ENCODE measurements at regions of chr3 and their contacts with region 1.

Region 1: DNA sequence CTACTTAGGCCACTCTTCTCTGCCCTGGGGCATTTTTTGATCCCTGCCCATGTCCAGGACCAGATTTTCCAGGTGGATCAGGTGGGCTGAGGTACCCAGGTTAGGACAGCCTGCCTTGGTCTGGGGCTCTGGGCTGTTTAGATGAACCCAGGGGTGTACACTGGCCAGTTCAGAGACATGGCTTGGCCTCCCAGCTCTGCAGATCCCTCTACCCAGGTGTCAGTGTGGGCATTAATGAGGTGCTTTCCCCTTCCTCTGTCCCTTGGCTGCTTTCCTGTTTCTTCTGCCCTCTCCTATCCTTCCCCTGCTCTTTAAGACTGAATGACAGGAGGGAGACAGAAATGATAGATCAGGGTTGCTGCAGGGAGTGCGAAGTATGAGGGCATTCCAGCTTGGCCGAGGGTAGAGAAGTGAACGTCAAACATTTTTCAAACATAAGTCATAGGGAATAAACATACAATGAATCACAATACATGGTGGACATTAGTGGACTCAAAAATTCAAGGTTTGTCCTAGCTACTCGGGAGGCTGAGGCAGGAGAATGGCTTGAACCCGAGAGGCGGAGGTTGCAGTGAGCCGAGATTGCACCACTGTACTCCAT is 30.5 kb downstream of the RTP1 start:
- DNase-seq: no peak
- H3K4me3 ChIP-seq: no peak overlapping the region
- H3K27ac ChIP-seq: no peak overlapping the region
- H3K4me1 ChIP-seq: no peaks in the 10 kb centered on the region
- H3K27me3 ChIP-seq: no peaks in the 10 kb centered on the region
- CTCF ChIP-seq: no peak
- EP300 ChIP-seq: no peak
- POLR2A ChIP-seq: no peak

Region 2: GRCh38 chr3:187291001-187291511 is 63.3 kb after region 1 on chr3:
- in situ Hi-C with region 1: no loop called
- intact Hi-C with region 1: loop called (anchors 10 kb)
- DNase-seq: no peak
- H3K4me3 ChIP-seq: peak overlapping the region; percentile 3 to 38 (median 16)
- H3K27ac ChIP-seq: peak overlapping the region; percentile 41 to 85 (median 66)
- H3K4me1 ChIP-seq: peaks cover 0 to 10% (median 6%) of the 10 kb centered on the region in 4 donors
- H3K27me3 ChIP-seq: no peaks in the 10 kb centered on the region
- CTCF ChIP-seq: no peak
- EP300 ChIP-seq: no peak
- POLR2A ChIP-seq: no peak

Region 3: DNA sequence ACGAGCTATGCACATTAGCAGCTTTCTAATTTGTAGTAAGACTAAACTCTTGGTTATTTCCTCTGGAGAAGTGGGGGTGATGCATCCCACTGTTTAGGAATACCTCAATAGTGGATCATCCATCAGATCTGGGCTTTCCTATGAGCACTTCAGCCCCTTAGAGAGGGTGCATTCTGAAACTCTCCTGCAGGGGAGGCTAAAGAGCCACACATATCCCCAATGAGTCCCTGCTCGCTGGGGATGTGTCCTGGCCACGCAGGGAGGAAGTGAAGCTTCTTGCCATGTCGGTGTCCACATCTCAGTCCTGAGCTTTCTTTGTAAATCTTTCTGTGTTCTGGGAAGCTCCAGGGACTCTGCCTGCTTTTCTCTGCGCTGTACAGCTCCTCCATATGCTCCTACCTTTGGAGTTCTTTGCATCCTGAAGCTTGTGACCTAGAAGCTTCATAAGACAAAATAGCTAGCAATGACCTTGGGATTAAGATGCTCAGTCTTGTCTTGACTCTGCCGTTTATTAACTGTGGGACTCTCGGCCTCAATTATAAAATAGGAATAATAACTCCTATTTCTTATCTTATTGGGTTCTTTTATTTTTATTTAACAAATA is 92.0 kb after region 1 on chr3:
- in situ Hi-C with region 1: loop called in 1 of 4 experiments (anchors 10 kb)
- intact Hi-C with region 1: no loop called
- DNase-seq: peak; percentile 76
- H3K4me3 ChIP-seq: no peak overlapping the region
- H3K27ac ChIP-seq: no peak overlapping the region
- H3K4me1 ChIP-seq: peaks cover 0 to 13% (median 9%) of the 10 kb centered on the region in 4 donors
- H3K27me3 ChIP-seq: peaks cover 11% of the 10 kb centered on the region
- CTCF ChIP-seq: peak; percentile 80 to 94 (median 90)
- EP300 ChIP-seq: no peak
- POLR2A ChIP-seq: no peak

Region 4: GRCh38 chr3:187369089-187369447 is 141.3 kb after region 1 on chr3:
- in situ Hi-C with region 1: no loop called
- intact Hi-C with region 1: no loop called
- DNase-seq: no peak
- H3K4me3 ChIP-seq: peak overlapping the region in 3 of 4 donors; percentile 40 to 71 (median 47)
- H3K27ac ChIP-seq: peak overlapping the region; percentile 85 to 94 (median 86)
- H3K4me1 ChIP-seq: peaks cover 9 to 24% (median 15%) of the 10 kb centered on the region in 4 donors
- H3K27me3 ChIP-seq: no peaks in the 10 kb centered on the region
- CTCF ChIP-seq: no peak
- EP300 ChIP-seq: no peak
- POLR2A ChIP-seq: no peak

Region 5: DNA sequence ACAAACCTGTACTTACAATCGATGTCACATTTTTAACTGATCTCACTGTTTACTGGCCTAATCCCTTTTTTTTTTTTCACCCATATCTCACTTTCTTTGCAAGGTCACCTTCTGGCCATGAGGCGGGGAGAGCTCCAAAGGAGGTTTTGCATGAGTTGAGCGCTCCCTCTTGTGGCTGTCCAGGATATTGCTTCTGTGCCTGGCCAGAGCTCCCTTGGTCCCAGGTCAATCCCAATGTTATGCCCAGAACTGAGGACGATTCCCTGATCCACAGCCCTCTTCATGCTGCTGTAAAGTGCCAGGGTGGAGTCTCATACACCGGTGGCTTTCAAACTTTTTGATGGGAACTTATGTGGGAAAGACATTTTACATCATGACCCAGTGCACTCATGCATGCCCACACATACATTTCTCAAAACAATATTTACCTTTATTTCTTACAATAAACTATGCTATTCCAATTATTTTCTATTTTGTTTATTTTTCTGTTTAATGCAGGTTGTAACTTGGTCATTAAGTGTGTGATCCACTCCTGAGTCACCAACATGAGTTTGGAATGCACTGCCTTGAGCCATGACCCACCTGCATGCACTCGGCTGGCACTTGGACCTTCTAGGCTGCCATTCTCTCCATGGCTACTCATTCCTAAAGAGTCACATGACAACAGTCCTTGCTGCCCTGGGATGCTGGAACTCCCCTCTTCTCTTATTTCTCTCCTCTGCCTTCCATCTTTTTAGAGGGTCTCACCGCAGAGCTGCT is 452.1 kb after region 1 on chr3:
- in situ Hi-C with region 1: loop called in 3 of 4 experiments (anchors 10 kb)
- intact Hi-C with region 1: loop called (anchors 5 kb)
- DNase-seq: peak; percentile 79
- H3K4me3 ChIP-seq: no peak overlapping the region
- H3K27ac ChIP-seq: no peak overlapping the region
- H3K4me1 ChIP-seq: peaks cover 0 to 4% (median 0%) of the 10 kb centered on the region in 4 donors
- H3K27me3 ChIP-seq: peaks cover 11% of the 10 kb centered on the region
- CTCF ChIP-seq: peak; percentile 90 to 94 (median 92)
- EP300 ChIP-seq: no peak
- POLR2A ChIP-seq: no peak

Region 6: DNA sequence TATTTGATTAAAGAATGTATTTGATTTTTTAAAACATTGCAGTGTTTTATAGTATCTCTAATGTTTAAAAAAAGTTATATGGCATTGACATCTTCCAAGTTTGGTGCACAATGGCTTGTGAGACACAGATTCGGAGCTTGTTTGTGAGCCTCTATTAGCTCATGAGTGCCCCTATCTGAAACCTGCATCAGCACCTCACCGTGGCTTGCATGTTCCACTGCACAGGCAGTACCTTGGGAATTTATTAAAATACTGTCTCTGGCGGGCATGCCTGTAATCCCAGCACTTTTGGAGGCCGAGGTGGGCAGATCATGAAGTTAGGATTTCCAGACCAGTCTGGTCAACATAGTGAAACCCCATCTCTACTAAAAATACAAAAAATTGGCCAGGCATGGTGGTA is 481.4 kb after region 1 on chr3:
- in situ Hi-C with region 1: loop called in 1 of 4 experiments (anchors 10 kb)
- intact Hi-C with region 1: no loop called
- DNase-seq: no peak
- H3K4me3 ChIP-seq: no peak overlapping the region
- H3K27ac ChIP-seq: no peak overlapping the region
- H3K4me1 ChIP-seq: peaks cover 0 to 4% (median 0%) of the 10 kb centered on the region in 4 donors
- H3K27me3 ChIP-seq: no peaks in the 10 kb centered on the region
- CTCF ChIP-seq: no peak
- EP300 ChIP-seq: no peak
- POLR2A ChIP-seq: no peak